Vagina (tissue), 2 donors: ENCODE measurements at regions of chr21 and their contacts with region 1.

Region 1: GRCh38 chr21:15064576-15065391 is at the start of gene NRIP1:
- DNase-seq: no peak
- H3K4me3 ChIP-seq: peak within 1 kb of the TSS; percentile 90 to 98
- H3K27ac ChIP-seq: peak within 1 kb of the TSS; percentile 97
- H3K4me1 ChIP-seq: peaks cover 24% of the 10 kb centered on the region
- H3K27me3 ChIP-seq: no peaks in the 10 kb centered on the region
- CTCF ChIP-seq: no peak
- POLR2A ChIP-seq: peak in 1 of 2 donors; percentile 84
- total RNA-seq, gene NRIP1: 30.9 TPM

Region 2: GRCh38 chr21:14877570-14878228 is 187.1 kb before region 1 on chr21:
- intact Hi-C with region 1: loop called (anchors 10 kb)
- DNase-seq: no peak
- H3K4me3 ChIP-seq: no peak overlapping the region
- H3K27ac ChIP-seq: peak overlapping the region; percentile 7
- H3K4me1 ChIP-seq: peaks cover 34% of the 10 kb centered on the region
- H3K27me3 ChIP-seq: no peaks in the 10 kb centered on the region
- CTCF ChIP-seq: no peak
- POLR2A ChIP-seq: no peak